GM10248 (cell line): ENCODE measurements at regions of chr4 and their contacts with region 1.

Region 1: DNA sequence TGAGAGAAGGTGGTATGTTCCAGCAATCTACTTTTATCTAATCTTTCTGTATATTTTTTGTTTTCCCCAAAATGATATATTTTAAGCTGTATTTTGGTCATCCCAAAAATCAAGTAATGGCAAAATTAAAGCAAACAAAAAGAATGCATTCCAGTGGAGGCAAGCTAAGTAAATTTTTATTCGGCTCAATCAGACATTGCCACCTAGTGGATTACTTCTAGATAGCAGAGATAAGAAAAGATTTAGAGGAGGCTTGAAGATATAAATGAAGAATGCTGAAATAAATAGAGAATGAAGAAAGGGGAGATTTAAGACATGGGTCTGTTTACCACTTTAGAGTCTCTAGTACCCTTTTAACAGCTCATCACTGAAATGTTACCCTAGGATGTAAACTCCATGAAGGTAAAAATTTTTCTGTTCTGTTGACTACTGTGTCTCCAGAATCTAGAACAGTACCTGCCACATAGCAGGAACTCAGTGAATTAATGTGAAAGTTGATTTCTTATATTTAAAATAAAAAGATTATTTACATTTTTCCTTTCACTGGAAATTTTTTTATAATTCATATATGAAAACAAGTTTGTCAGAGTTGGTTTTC is 110.9 kb upstream of the ANK2 start:
- DNase-seq: peak; percentile 40
- CTCF ChIP-seq: peak; percentile 52

Region 2: GRCh38 chr4:112853662-112854256 is 84.8 kb before region 1 on chr4:
- CTCF ChIA-PET with region 1: interaction called, 15 read pairs
- POLR2A ChIA-PET with region 1: no interaction called
- DNase-seq: no peak
- CTCF ChIP-seq: peak; percentile 34

Region 3: GRCh38 chr4:112927544-112927943 is 11.0 kb before region 1 on chr4:
- CTCF ChIA-PET with region 1: interaction called, 43 read pairs
- POLR2A ChIA-PET with region 1: no interaction called
- DNase-seq: no peak
- CTCF ChIP-seq: no peak

Region 4: DNA sequence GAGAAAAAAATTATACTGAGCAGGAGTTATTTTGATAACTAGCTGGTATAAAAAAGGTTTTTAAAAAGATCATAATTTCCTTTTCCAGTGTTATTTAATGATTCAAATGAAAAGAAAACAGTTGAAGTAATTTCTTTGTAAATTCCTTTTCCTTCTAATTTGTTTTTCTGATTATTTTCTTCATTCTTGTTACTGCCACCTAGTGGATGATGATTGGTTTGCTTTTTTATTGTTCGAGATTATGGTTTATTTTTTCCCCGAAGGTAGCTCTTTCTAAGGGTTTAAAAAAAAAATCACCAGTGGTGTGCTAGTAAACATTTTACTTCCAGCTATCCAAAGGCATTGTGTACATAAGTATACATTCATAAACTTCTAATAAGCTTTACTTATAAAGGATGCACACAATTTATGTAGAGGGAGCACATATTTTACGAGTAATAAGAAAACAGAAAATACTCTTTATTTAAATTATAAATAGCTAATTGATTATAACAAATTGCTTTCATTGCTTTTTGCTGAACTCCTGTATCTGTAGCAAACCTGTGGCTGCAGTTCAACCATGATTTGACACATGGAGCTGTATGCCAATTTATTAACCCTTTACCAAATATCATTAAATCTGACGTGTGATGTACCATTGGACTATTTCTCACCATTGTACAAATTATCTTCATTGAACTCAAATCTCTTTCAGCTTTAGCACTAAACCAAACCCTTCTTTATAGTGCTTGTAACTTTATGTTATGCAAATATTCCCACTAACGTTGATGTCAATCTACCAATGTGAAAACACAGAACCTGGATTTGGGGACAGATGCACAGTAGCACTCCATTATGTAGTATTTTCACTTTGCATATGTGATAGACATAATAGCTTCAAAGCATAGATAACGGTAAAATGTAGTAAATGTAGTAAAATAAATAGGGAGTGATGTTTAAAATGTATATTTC is 13.1 kb after region 1 on chr4:
- CTCF ChIA-PET with region 1: interaction called, 32 read pairs
- POLR2A ChIA-PET with region 1: no interaction called
- DNase-seq: peak; percentile 20
- CTCF ChIP-seq: peak; percentile 53

Region 5: DNA sequence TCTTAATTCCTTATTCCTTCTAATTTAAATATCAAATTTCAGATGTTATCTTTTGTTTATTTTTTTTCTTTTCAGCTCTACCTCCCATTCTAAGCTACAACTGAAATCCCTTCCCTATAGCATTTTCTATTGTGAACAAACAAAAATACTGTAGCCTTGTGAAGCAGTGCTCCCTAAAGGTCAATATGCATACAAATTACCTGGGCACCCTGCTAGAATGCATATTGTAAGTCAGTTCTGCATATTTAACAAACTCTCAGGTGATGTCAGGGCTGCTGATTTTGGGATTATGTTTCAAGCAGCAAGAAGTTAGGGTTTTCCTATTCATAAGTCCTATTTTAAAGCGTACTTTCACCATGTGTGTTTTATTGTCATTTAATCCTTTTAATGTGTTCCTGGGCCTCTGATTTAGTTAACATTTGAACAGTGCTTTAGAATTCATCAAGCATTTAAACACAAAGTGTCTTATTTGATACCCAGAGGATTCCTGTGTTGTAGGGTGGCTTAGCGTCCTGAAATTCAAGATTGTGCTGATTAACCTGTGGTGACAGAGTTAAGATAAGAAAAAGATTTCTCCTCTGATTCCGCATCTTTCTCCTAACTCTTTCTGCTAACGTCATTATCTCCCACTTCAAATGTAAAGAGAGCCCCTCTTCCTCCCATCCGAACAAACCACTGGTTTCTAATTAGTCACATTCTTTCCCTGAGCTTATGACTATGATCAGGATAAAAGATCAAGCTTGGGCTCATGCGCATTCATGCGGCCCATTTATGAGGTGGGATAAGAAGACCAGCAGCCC is 332.2 kb after region 1 on chr4:
- CTCF ChIA-PET with region 1: no interaction called
- POLR2A ChIA-PET with region 1: no interaction called
- DNase-seq: no peak
- CTCF ChIP-seq: no peak

Region 6: DNA sequence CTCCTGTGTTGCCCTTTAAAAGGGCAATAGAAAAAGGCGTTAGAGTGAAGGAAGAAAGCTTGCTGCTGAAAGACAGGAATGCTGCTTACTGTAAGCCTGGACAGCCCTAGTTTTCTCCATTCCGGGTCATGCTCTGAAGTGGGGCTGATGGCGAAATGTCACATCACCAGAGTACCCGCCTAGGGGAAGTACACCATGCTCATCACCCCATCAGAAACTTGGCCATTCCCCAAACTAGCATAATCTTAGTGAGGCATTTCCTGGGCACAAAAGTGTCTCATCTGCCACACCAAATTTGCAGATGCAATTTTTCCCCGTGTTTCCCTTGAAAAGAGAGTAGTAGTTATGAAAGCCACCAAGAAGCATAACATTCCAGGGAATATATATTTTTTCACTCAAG is 870.8 kb after region 1 on chr4:
- CTCF ChIA-PET with region 1: no interaction called
- POLR2A ChIA-PET with region 1: no interaction called
- DNase-seq: no peak
- CTCF ChIP-seq: no peak